Activated T-helper 2 cell treated with anti-CD3 and anti-CD28 coated beads, Interferon-gamma antibody, Interleukin-2, Interleukin-4, amounts not matched to agents 10 μg/mL and 5 μg/mL and 100 μg/mL, durations not matched to agents 14 hours and 24 hours and 36 hours (primary cell): ENCODE measurements at regions of chr6 and their contacts with region 1.

Region 1: DNA sequence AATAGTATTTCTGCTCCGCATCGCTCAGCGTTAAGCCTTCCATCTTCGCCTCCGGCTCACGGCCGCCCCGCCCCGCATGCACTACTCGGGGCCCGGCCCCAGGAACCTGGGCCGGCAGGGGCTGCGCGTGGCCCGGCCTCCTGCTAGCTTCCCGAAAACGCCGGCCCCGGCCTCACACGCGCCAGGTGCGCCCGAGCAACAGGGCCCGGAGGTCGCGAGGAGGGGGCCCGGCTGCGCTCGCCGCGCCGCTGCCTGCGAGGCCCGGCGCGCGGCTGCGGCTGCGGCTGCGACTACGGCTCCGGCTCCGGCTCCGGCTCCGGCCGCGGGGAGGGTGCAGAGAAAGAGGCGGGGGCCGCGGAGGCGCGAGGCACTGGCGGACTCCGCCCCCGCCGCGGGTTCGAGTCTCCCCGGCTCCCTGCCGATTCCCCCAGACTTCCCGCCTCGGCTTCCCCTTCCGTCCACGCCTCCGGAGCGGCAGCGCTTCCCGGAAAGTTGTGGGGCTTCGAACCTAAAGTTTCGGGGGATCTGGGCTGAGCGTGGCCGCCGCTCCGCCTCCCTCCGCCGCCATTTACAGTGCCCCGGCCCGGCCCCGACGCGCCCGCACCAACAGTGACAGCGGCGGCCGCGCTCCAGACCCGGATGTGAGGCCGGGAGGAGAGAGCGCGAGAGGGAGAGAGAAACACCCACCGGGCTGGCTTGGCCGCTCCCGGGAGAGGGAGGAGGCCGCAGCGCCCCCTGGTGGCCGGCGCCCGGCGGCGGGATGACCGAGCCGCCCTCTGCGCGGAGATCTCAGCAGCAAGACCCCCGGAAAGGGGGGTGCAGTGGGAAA is at the start of gene REPS1:
- DNase-seq: peak; percentile 86
- H3K4me3 Mint-ChIP-seq: peak within 1 kb of the TSS; percentile 92
- H3K27ac Mint-ChIP-seq: peak within 1 kb of the TSS; percentile 95
- H3K4me1 Mint-ChIP-seq: peaks cover 6% of the 10 kb centered on the region
- H3K27me3 Mint-ChIP-seq: peaks cover 2% of the 10 kb centered on the region
- total RNA-seq, gene REPS1: 96.3 and 99.8 TPM in 2 replicates

Region 2: GRCh38 chr6:138297761-138298298 is 690.0 kb before region 1 on chr6:
- intact Hi-C with region 1: no loop called
- DNase-seq: no peak
- H3K4me3 Mint-ChIP-seq: no peak overlapping the region
- H3K27ac Mint-ChIP-seq: no peak overlapping the region
- H3K4me1 Mint-ChIP-seq: peaks cover 4% of the 10 kb centered on the region
- H3K27me3 Mint-ChIP-seq: no peaks in the 10 kb centered on the region

Region 3: GRCh38 chr6:138773177-138774091 is 214.4 kb before region 1 on chr6 and contains the start of gene CCDC28A:
- intact Hi-C with region 1: loop called (anchors 2 kb)
- DNase-seq: peak; percentile 92
- H3K4me3 Mint-ChIP-seq: peak within 1 kb of the TSS; percentile 97
- H3K27ac Mint-ChIP-seq: peak within 1 kb of the TSS; percentile 99
- H3K4me1 Mint-ChIP-seq: peaks cover 23% of the 10 kb centered on the region
- H3K27me3 Mint-ChIP-seq: no peaks in the 10 kb centered on the region
- total RNA-seq, gene CCDC28A: 18.2 and 19.2 TPM in 2 replicates

Region 4: GRCh38 chr6:138891255-138891986 is 96.4 kb before region 1 on chr6:
- intact Hi-C with region 1: loop called (anchors 5 kb)
- DNase-seq: no peak
- H3K4me3 Mint-ChIP-seq: no peak overlapping the region
- H3K27ac Mint-ChIP-seq: no peak overlapping the region
- H3K4me1 Mint-ChIP-seq: no peaks in the 10 kb centered on the region
- H3K27me3 Mint-ChIP-seq: no peaks in the 10 kb centered on the region

Region 5: GRCh38 chr6:138931660-138932059 is 56.2 kb before region 1 on chr6:
- intact Hi-C with region 1: no loop called
- DNase-seq: no peak
- H3K4me3 Mint-ChIP-seq: no peak overlapping the region
- H3K27ac Mint-ChIP-seq: no peak overlapping the region
- H3K4me1 Mint-ChIP-seq: peaks cover 11% of the 10 kb centered on the region
- H3K27me3 Mint-ChIP-seq: no peaks in the 10 kb centered on the region

Region 6: GRCh38 chr6:138944412-138944811 is 43.4 kb before region 1 on chr6:
- intact Hi-C with region 1: loop called (anchors 1 kb)
- DNase-seq: no peak
- H3K4me3 Mint-ChIP-seq: no peak overlapping the region
- H3K27ac Mint-ChIP-seq: no peak overlapping the region
- H3K4me1 Mint-ChIP-seq: peaks cover 46% of the 10 kb centered on the region
- H3K27me3 Mint-ChIP-seq: no peaks in the 10 kb centered on the region

Region 7: DNA sequence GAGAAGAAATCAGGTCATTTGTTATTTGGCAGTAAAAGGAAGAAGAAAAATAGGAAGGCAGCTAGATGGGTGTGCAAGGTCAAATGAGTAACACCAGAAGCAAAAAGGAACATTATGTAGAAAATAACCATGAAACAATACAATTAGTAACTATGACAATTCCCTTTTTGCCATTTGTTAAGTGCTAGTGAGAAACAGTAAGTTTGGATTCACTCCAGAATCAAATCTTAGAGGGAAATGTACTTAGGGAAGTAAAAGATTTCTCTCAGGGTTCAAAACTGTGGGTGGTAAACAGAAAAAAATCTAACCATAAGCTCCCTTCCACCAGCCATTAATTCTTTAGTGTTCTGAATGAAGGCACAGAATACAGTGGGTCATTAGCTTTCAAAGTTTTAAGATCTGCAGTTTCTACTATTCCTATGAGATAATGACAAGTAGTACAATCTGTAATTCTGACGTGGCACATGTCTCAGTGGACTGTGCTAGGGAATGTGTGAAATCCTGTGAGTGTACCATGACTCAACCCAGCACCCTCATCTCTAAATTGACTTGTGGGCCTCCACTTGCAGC is 16.9 kb before region 1 on chr6:
- intact Hi-C with region 1: no loop called
- DNase-seq: no peak
- H3K4me3 Mint-ChIP-seq: no peak overlapping the region
- H3K27ac Mint-ChIP-seq: peak overlapping the region; percentile 5
- H3K4me1 Mint-ChIP-seq: peaks cover 40% of the 10 kb centered on the region
- H3K27me3 Mint-ChIP-seq: no peaks in the 10 kb centered on the region

Region 8: GRCh38 chr6:139109558-139109957 is 121.7 kb after region 1 on chr6:
- intact Hi-C with region 1: loop called (anchors 5 kb)
- DNase-seq: no peak
- H3K4me3 Mint-ChIP-seq: no peak overlapping the region
- H3K27ac Mint-ChIP-seq: no peak overlapping the region
- H3K4me1 Mint-ChIP-seq: peaks cover 28% of the 10 kb centered on the region
- H3K27me3 Mint-ChIP-seq: no peaks in the 10 kb centered on the region

Region 9: DNA sequence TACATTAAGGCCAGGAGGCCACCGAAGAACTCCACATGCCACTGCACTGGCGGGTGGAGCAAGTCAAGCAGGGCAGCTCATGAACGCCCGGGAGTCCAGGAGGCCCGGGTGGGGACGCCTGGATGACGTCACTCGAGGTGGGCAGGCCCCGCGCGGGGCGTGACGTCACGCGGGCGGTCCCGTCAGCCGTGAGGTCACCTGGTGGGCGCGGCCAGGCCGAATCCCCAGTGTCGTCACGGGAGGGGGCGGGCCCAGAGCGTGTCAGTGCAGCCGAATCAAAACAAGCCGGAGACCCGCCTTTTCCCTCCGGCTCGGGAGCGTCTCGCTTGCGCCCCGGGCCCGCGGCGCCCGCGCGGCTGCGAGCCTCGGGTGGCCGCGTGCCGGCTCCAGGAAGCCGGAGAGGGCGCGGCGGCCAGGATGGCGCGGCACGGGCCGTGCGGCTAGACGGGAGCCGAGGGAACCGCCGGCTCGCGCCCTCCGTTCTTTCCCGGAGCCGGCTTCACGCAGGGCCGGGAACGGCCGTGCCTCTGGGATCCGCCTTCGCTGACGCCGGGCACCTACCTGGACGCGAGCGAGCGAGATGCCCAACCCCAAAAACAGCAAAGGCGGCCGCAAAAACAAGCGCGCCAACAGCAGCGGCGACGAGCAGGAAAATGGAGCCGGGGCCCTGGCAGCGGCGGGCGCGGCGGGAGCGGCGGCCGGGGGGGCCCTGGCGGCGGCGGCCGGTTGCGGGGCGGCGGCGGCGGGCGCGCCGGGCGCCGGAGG is 147.1 kb after region 1 on chr6 and contains the start of gene HECA:
- intact Hi-C with region 1: loop called (anchors 5 kb)
- DNase-seq: peak; percentile 96
- H3K4me3 Mint-ChIP-seq: peak within 1 kb of the TSS; percentile 81
- H3K27ac Mint-ChIP-seq: peak within 1 kb of the TSS; percentile 85
- H3K4me1 Mint-ChIP-seq: peaks cover 60% of the 10 kb centered on the region
- H3K27me3 Mint-ChIP-seq: no peaks in the 10 kb centered on the region
- total RNA-seq, gene HECA: 33.6 and 36.9 TPM in 2 replicates

Region 10: DNA sequence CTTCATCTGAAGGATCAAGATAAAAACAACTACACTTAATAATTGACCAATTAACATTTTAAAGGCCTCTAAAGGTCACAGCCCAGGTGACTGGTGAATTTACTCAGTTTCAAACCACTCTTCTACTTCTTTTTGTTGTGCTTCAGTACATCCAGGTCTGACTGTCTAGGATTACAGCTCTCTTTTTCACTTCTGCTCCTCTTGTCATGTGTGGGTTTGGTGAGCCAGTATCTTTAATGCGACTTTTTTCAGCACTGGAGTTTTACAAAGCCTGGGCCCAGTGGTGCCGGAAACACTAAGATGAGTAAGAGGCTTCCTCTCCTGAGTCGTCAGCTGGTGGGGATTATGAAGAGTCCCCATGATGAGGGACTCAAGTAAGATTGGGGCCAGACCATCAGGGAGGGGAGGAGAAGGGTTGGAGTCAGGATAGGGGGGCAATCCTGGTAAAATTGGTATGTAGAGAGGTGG is 174.0 kb after region 1 on chr6:
- intact Hi-C with region 1: loop called (anchors 5 kb)
- DNase-seq: peak; percentile 65
- H3K4me3 Mint-ChIP-seq: peak overlapping the region; percentile 65
- H3K27ac Mint-ChIP-seq: peak overlapping the region; percentile 99
- H3K4me1 Mint-ChIP-seq: peaks cover 61% of the 10 kb centered on the region
- H3K27me3 Mint-ChIP-seq: no peaks in the 10 kb centered on the region